GM12878 (cell line): ENCODE measurements at regions of chr5 and their contacts with region 1.

Region 1: DNA sequence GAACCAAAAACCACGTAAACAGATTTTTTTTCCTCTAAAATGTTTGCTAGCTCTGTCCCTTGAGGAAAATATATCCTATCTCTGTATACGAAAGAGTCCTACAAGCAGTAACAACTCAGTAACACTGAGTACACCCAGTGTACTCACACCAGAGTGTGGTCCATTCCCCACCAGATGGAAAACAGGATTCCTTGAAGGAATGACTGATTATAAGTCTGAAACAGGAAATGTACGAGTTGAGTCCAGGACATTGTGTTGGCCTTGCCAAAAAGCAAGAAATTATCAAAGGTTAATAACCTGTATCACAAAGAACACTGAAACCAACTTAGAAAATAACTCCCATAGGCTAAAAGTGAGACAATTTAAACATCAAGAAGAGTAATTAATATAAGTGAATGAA is 20.4 kb downstream of the GOLPH3 start:
- DNase-seq: no peak
- ATAC-seq: no peak
- H3K4me3 ChIP-seq: no peak overlapping the region
- H3K27ac ChIP-seq: no peak overlapping the region
- H3K4me1 ChIP-seq: peaks cover 17% of the 10 kb centered on the region
- H3K27me3 ChIP-seq: no peaks in the 10 kb centered on the region
- CTCF ChIP-seq: no peak
- EP300 ChIP-seq: no peak
- POLR2A ChIP-seq: no peak
- RAD21 ChIP-seq: no peak

Region 2: GRCh38 chr5:32042470-32042981 is 111.2 kb before region 1 on chr5:
- CTCF ChIA-PET with region 1: no interaction called
- POLR2A ChIA-PET with region 1: no interaction called
- RAD21 ChIA-PET with region 1: no interaction called
- SMC1A ChIA-PET with region 1: no interaction called
- in situ Hi-C with region 1: no loop called
- intact Hi-C with region 1: no loop called
- DNase-seq: no peak
- ATAC-seq: no peak
- H3K4me3 ChIP-seq: no peak overlapping the region
- H3K27ac ChIP-seq: no peak overlapping the region
- H3K4me1 ChIP-seq: no peaks in the 10 kb centered on the region
- H3K27me3 ChIP-seq: no peaks in the 10 kb centered on the region
- CTCF ChIP-seq: no peak
- EP300 ChIP-seq: no peak
- POLR2A ChIP-seq: no peak
- RAD21 ChIP-seq: no peak

Region 3: DNA sequence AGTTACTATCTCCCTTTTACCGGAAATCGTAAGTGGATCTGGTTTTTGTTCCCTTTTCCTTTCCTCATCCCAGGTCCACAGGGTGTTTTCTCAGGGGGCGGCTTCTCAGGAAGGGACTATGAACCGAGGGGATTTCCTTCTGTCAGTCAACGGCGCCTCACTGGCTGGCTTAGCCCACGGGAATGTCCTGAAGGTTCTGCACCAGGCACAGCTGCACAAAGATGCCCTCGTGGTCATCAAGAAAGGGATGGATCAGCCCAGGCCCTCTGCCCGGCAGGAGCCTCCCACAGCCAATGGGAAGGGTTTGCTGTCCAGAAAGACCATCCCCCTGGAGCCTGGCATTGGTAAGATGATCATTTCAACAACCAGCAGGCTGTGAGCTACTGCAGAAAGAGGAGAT is 55.4 kb before region 1 on chr5:
- CTCF ChIA-PET with region 1: no interaction called
- POLR2A ChIA-PET with region 1: no interaction called
- RAD21 ChIA-PET with region 1: no interaction called
- SMC1A ChIA-PET with region 1: no interaction called
- in situ Hi-C with region 1: no loop called
- intact Hi-C with region 1: no loop called
- DNase-seq: no peak
- ATAC-seq: no peak
- H3K4me3 ChIP-seq: no peak overlapping the region
- H3K27ac ChIP-seq: no peak overlapping the region
- H3K4me1 ChIP-seq: no peaks in the 10 kb centered on the region
- H3K27me3 ChIP-seq: no peaks in the 10 kb centered on the region
- CTCF ChIP-seq: no peak
- EP300 ChIP-seq: no peak
- POLR2A ChIP-seq: no peak
- RAD21 ChIP-seq: no peak

Region 4: GRCh38 chr5:32109236-32109635 is 44.5 kb before region 1 on chr5:
- CTCF ChIA-PET with region 1: no interaction called
- POLR2A ChIA-PET with region 1: no interaction called
- RAD21 ChIA-PET with region 1: no interaction called
- SMC1A ChIA-PET with region 1: no interaction called
- in situ Hi-C with region 1: no loop called
- intact Hi-C with region 1: no loop called
- DNase-seq: no peak
- ATAC-seq: no peak
- H3K4me3 ChIP-seq: no peak overlapping the region
- H3K27ac ChIP-seq: no peak overlapping the region
- H3K4me1 ChIP-seq: no peaks in the 10 kb centered on the region
- H3K27me3 ChIP-seq: no peaks in the 10 kb centered on the region
- CTCF ChIP-seq: no peak
- EP300 ChIP-seq: no peak
- POLR2A ChIP-seq: no peak
- RAD21 ChIP-seq: no peak

Region 5: GRCh38 chr5:32163785-32164184 is 10.1 kb after region 1 on chr5:
- CTCF ChIA-PET with region 1: interaction called, 4 read pairs
- POLR2A ChIA-PET with region 1: interaction called, 6 read pairs
- RAD21 ChIA-PET with region 1: interaction called, 5 read pairs
- SMC1A ChIA-PET with region 1: interaction called, 12 read pairs
- in situ Hi-C with region 1: no loop called
- intact Hi-C with region 1: no loop called
- DNase-seq: no peak
- ATAC-seq: peak; percentile 50
- H3K4me3 ChIP-seq: peak overlapping the region; percentile 45; the same call in 1 of the 2 replicates
- H3K27ac ChIP-seq: peak overlapping the region; percentile 63
- H3K4me1 ChIP-seq: peaks cover 45% of the 10 kb centered on the region
- H3K27me3 ChIP-seq: no peaks in the 10 kb centered on the region
- CTCF ChIP-seq: no peak
- EP300 ChIP-seq: no peak
- POLR2A ChIP-seq: no peak
- RAD21 ChIP-seq: no peak